WTC11 (cell line): ENCODE measurements at regions of chr20 and their contacts with region 1.

Region 1: GRCh38 chr20:38926142-38926933 is at the start of gene FAM83D:
- DNase-seq: peak; percentile 99
- ATAC-seq: peak; percentile 94
- H3K4me3 Mint-ChIP-seq: peak within 1 kb of the TSS; percentile 86
- H3K27ac Mint-ChIP-seq: no peak within 1 kb of the TSS
- H3K4me1 Mint-ChIP-seq: peaks cover 32% of the 10 kb centered on the region
- H3K27me3 Mint-ChIP-seq: no peaks in the 10 kb centered on the region
- CTCF ChIP-seq: no peak; the same call in 1 of the 2 replicates
- total RNA-seq, gene FAM83D: 57.7 to 66.9 TPM (median 58.3 TPM) in 3 replicates

Region 2: DNA sequence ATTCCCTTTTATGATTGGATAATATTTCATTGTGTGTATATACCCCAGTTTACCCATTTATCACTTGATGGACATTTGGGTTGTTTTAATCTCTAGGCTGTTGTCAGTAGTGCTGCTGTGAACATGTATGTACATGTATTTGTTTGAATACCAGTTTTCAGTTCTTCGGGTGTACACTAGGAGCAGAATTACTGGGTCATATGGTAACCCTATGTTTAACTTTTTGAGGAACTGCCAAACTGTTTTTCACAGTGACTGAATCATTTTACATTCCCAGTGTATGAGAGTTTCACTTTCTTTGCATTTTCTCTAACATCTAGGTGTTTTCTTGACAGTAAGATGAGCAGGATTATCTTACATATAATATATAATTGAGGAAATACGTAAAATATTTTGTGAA is 390.0 kb before region 1 on chr20:
- CTCF ChIA-PET with region 1: no interaction called
- POLR2A ChIA-PET with region 1: interaction called, 15 read pairs
- DNase-seq: no peak
- ATAC-seq: no peak
- H3K4me3 Mint-ChIP-seq: no peak overlapping the region
- H3K27ac Mint-ChIP-seq: no peak overlapping the region
- H3K4me1 Mint-ChIP-seq: no peaks in the 10 kb centered on the region
- H3K27me3 Mint-ChIP-seq: no peaks in the 10 kb centered on the region
- CTCF ChIP-seq: no peak

Region 3: GRCh38 chr20:38962044-38962927 is 35.9 kb after region 1 on chr20 and contains the start of gene DHX35:
- CTCF ChIA-PET with region 1: interaction called, 15 read pairs
- POLR2A ChIA-PET with region 1: interaction called, 21 read pairs
- DNase-seq: peak; percentile 98
- ATAC-seq: peak; percentile 99
- H3K4me3 Mint-ChIP-seq: peak within 1 kb of the TSS; percentile 97
- H3K27ac Mint-ChIP-seq: peak within 1 kb of the TSS; percentile 99
- H3K4me1 Mint-ChIP-seq: peaks cover 24% of the 10 kb centered on the region
- H3K27me3 Mint-ChIP-seq: no peaks in the 10 kb centered on the region
- CTCF ChIP-seq: no peak
- total RNA-seq, gene DHX35: 17.8 to 20.4 TPM (median 18.7 TPM) in 3 replicates

Region 4: GRCh38 chr20:39253051-39253755 is 326.9 kb after region 1 on chr20:
- CTCF ChIA-PET with region 1: no interaction called
- POLR2A ChIA-PET with region 1: no interaction called
- DNase-seq: no peak
- ATAC-seq: no peak
- H3K4me3 Mint-ChIP-seq: no peak overlapping the region
- H3K27ac Mint-ChIP-seq: no peak overlapping the region
- H3K4me1 Mint-ChIP-seq: no peaks in the 10 kb centered on the region
- H3K27me3 Mint-ChIP-seq: no peaks in the 10 kb centered on the region; the same call in 1 of the 2 replicates
- CTCF ChIP-seq: no peak